Activated T-helper 1 cell treated with anti-CD3 and anti-CD28 coated beads, Interleukin-12 subunit alpha, Interleukin-12 subunit beta, Interleukin-2, Interleukin-4 antibody, amounts not matched to agents 30 ng/mL and 10 ng/mL and 1 ng/mL, durations not matched to agents 14 hours and 24 hours and 36 hours (primary cell): ENCODE measurements at regions of chr16 and their contacts with region 1.

Region 1: GRCh38 chr16:68310761-68311511 is at the starts of genes PRMT7 and SLC7A6OS:
- DNase-seq: peak; percentile 92
- H3K4me3 Mint-ChIP-seq: peak within 1 kb of the TSS; percentile 99
- H3K27ac Mint-ChIP-seq: peak within 1 kb of the TSS; percentile 98
- H3K4me1 Mint-ChIP-seq: peaks cover 43% of the 10 kb centered on the region
- H3K27me3 Mint-ChIP-seq: no peaks in the 10 kb centered on the region
- total RNA-seq, gene PRMT7: 80.6 and 85.2 TPM in 2 replicates
- total RNA-seq, gene SLC7A6OS: 26.5 and 27.6 TPM in 2 replicates

Region 2: DNA sequence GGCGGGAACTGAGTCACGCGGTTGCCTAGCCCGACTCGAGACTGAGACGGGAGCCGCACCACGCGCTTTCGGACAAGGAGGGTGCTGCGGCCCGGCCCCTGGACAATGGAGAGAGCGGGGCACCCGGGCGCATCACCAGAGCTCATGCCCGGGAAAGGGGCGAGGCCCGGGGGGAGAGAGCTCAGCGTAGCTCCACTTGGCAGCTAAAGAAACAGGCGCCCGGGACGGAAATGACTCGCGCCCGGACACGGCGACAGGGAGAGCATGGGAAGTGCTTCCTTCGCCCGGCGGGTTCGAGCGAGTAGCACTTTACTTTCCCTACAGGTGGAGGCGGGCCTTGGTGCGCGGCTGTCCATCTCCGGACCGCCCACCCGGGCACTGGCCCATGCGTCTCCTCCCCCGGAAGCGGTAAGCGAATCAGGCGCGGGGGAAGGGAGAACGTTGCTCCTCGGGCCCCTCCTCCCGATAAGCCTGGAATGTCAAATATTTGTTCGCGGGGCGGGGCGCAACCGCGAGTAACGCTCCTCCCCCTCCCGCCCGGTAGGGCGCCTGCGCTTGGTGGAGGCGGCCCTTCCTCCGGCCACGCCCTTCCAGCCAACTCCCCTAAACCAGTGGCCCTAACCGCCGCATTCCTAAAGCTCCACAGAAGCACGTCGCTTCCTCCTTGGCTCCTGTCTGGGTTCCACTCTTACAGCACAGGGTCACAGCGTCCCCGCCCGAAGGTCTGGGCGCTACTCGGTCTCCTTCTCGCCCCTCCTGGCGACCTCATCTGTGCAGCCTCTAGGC is 73.5 kb before region 1 on chr16:
- intact Hi-C with region 1: loop called (anchors 2 kb)
- DNase-seq: peak; percentile 84
- H3K4me3 Mint-ChIP-seq: peak overlapping the region; percentile 84
- H3K27ac Mint-ChIP-seq: peak overlapping the region; percentile 59
- H3K4me1 Mint-ChIP-seq: peaks cover 26% of the 10 kb centered on the region
- H3K27me3 Mint-ChIP-seq: peaks cover 5% of the 10 kb centered on the region

Region 3: GRCh38 chr16:68244903-68245853 is 65.8 kb before region 1 on chr16 and contains the start of gene PLA2G15:
- intact Hi-C with region 1: loop called (anchors 1 kb)
- DNase-seq: peak; percentile 93
- H3K4me3 Mint-ChIP-seq: peak within 1 kb of the TSS; percentile 99
- H3K27ac Mint-ChIP-seq: peak within 1 kb of the TSS; percentile 82
- H3K4me1 Mint-ChIP-seq: peaks cover 18% of the 10 kb centered on the region
- H3K27me3 Mint-ChIP-seq: peaks cover 5% of the 10 kb centered on the region
- total RNA-seq, gene PLA2G15: 8.6 and 8.8 TPM in 2 replicates

Region 4: GRCh38 chr16:68328151-68328859 is 17.4 kb after region 1 on chr16:
- intact Hi-C with region 1: loop called (anchors 1 kb)
- DNase-seq: peak; percentile 73
- H3K4me3 Mint-ChIP-seq: no peak overlapping the region
- H3K27ac Mint-ChIP-seq: no peak overlapping the region
- H3K4me1 Mint-ChIP-seq: peaks cover 41% of the 10 kb centered on the region
- H3K27me3 Mint-ChIP-seq: no peaks in the 10 kb centered on the region